ENCODE measurements at regions of chr1 and their contacts with region 1.

Region 1: GRCh38 chr1:1307908-1308755 is at the starts of genes ACAP3 and PUSL1:
- DNase-seq: peak; percentile 73 to 89
- ATAC-seq: peak; percentile 72 to 77
- H3K4me3 ChIP-seq: peak within 1 kb of the TSS; percentile 67 to 92 (median 75)
- H3K27ac ChIP-seq: peak within 1 kb of the TSS; percentile 88 to 100 (median 96)
- H3K4me1 ChIP-seq: peaks cover 38 to 50% of the 10 kb centered on the region in 2 donors
- H3K27me3 ChIP-seq: no peaks in the 10 kb centered on the region
- CTCF ChIP-seq: peak in 3 of 5 experiments; percentile 20 to 51 (median 30)
- POLR2A ChIP-seq: peak in 1 of 2 donors; percentile 47
- total RNA-seq, gene ACAP3: 18.4 to 31.9 (median 25.8) TPM
- total RNA-seq, gene PUSL1: 6.2 to 13.1 (median 9.5) TPM

Region 2: GRCh38 chr1:1109743-1110142 is 198.4 kb before region 1 on chr1:
- in situ Hi-C with region 1: no loop called
- intact Hi-C with region 1: no loop called
- DNase-seq: no peak
- ATAC-seq: no peak
- H3K4me3 ChIP-seq: no peak overlapping the region
- H3K27ac ChIP-seq: no peak overlapping the region
- H3K4me1 ChIP-seq: no peaks in the 10 kb centered on the region
- H3K27me3 ChIP-seq: no peaks in the 10 kb centered on the region
- CTCF ChIP-seq: no peak
- POLR2A ChIP-seq: no peak

Region 3: GRCh38 chr1:1324521-1325287 is 16.6 kb after region 1 on chr1 and contains the starts of genes CPTP and INTS11:
- in situ Hi-C with region 1: no loop called
- intact Hi-C with region 1: loop called (anchors 2 kb)
- DNase-seq: peak; percentile 91 to 92
- ATAC-seq: peak; percentile 83 to 88
- H3K4me3 ChIP-seq: peak within 1 kb of the TSS; percentile 78 to 95 (median 85)
- H3K27ac ChIP-seq: peak within 1 kb of the TSS; percentile 86 to 97 (median 92)
- H3K4me1 ChIP-seq: peaks cover 43 to 53% of the 10 kb centered on the region in 2 donors
- H3K27me3 ChIP-seq: no peaks in the 10 kb centered on the region
- CTCF ChIP-seq: no peak
- POLR2A ChIP-seq: peak; percentile 76 to 91
- total RNA-seq, gene CPTP: 22.7 to 64.9 (median 34.0) TPM
- total RNA-seq, gene INTS11: 74.0 to 94.4 (median 84.7) TPM

Region 4: DNA sequence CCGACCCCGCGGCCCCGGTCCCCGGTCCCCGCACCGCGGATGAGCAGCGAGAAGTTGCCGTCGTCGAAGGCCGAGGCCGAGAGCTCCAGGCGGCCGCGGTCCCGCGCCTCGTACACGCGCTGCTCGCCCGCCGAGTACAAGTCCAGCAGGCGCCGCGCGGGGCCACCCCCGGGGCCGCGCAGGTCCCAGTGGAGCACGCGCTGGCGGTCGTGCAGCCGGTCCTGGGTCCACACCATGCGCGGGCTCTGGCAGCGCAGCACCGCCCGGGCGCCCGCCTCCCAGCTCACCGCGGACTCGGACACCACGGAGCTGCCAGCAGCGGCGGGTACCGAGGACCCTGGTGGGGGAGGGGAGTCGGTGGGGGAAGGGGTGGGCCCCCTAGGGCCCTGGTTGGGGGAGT is 47.3 kb after region 1 on chr1:
- in situ Hi-C with region 1: no loop called
- intact Hi-C with region 1: no loop called
- DNase-seq: no peak
- ATAC-seq: no peak
- H3K4me3 ChIP-seq: peak overlapping the region in 1 of 4 donors; percentile 20
- H3K27ac ChIP-seq: peak overlapping the region; percentile 2 to 80 (median 48)
- H3K4me1 ChIP-seq: peaks cover 13 to 43% of the 10 kb centered on the region in 2 donors
- H3K27me3 ChIP-seq: peaks cover 13 to 37% (median 28%) of the 10 kb centered on the region in 3 donors
- CTCF ChIP-seq: no peak
- POLR2A ChIP-seq: no peak